ENCODE measurements at regions of chr9 and their contacts with region 1.

Region 1: DNA sequence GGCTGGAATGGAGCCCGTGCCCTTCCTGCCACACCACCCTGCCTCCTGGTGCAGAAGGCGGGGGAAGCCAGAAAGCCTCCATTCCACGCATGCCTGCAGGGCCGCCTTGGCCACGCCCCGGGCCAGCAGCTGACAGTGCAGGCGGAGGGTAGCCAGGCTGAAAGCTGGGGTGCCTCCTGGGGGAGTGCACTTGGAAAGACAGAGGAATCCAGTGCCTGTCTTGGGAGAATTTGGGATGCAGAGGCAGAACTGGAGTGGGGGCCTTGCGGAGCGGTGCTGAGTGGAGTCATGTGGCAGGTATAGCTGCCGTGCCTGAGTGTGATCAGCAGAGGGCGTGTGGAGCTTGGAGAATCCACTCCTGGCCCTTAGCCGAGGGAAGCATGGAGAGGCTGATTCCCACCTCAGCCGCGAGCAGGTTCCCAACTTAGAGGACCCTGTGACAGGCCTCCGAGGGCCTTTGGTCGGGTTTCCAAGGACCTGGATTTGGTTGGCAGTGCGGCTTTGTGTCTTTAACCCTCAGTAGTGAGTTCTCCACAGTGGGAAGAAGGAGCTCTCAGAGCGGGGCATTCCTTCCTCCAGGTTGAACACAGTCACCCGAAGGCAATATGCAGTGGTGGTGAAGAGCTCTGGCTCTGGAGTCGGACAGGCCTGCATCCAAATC is 9.1 kb upstream of the URM1 start:
- DNase-seq: peak; percentile 81
- ATAC-seq: peak; percentile 91
- H3K4me3 Mint-ChIP-seq: peak overlapping the region; percentile 60
- H3K27ac Mint-ChIP-seq: peak overlapping the region; percentile 79
- H3K4me1 Mint-ChIP-seq: peaks cover 13% of the 10 kb centered on the region
- H3K27me3 Mint-ChIP-seq: no peaks in the 10 kb centered on the region

Region 2: GRCh38 chr9:128296337-128297220 is 65.5 kb before region 1 on chr9:
- CTCF ChIA-PET with region 1: interaction called, 37 read pairs
- DNase-seq: no peak
- ATAC-seq: no peak
- H3K4me3 Mint-ChIP-seq: no peak overlapping the region
- H3K27ac Mint-ChIP-seq: no peak overlapping the region
- H3K4me1 Mint-ChIP-seq: peaks cover 10% of the 10 kb centered on the region
- H3K27me3 Mint-ChIP-seq: no peaks in the 10 kb centered on the region

Region 3: GRCh38 chr9:128412120-128412790 is 50.1 kb after region 1 on chr9:
- CTCF ChIA-PET with region 1: interaction called, 38 read pairs
- DNase-seq: peak; percentile 68
- ATAC-seq: peak; percentile 65
- H3K4me3 Mint-ChIP-seq: no peak overlapping the region
- H3K27ac Mint-ChIP-seq: no peak overlapping the region
- H3K4me1 Mint-ChIP-seq: peaks cover 3% of the 10 kb centered on the region
- H3K27me3 Mint-ChIP-seq: peaks cover 57% of the 10 kb centered on the region

Region 4: DNA sequence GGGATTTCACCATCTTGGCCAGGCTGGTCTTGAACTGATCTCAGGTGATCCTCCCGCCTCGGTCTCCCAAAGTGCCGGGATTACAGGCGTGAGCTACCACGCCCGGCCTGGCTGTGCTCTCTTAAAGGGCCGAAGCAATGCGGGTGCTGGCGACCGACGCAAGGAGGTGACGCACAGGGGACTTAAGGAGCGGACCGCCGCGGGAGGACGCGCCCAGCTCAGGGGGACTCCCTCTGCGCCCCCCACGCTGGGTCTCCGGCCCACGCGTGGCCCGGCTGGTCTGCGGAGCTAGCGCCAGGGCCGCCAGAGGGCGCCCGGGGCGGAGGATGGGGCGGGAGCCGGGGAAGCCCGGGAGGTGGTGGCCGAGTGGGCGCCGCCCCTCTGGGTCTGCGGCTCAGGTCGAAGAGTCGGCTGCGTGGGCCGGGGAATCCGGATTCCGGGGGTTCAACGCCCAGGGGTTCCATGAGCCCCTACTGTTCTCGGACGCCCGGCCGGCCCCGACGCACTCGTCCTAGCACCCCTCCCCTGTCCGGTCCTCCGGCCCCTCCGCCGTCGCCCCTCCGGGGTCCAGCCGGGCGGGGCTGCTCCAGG is 58.0 kb after region 1 on chr9:
- CTCF ChIA-PET with region 1: interaction called, 38 read pairs
- DNase-seq: peak; percentile 77
- ATAC-seq: peak; percentile 87
- H3K4me3 Mint-ChIP-seq: peak overlapping the region; percentile 70
- H3K27ac Mint-ChIP-seq: no peak overlapping the region
- H3K4me1 Mint-ChIP-seq: peaks cover 29% of the 10 kb centered on the region
- H3K27me3 Mint-ChIP-seq: peaks cover 35% of the 10 kb centered on the region

Region 5: GRCh38 chr9:128438343-128439109 is 76.4 kb after region 1 on chr9:
- CTCF ChIA-PET with region 1: interaction called, 15 read pairs
- DNase-seq: peak; percentile 87
- ATAC-seq: peak; percentile 98
- H3K4me3 Mint-ChIP-seq: no peak overlapping the region
- H3K27ac Mint-ChIP-seq: peak overlapping the region; percentile 28
- H3K4me1 Mint-ChIP-seq: peaks cover 8% of the 10 kb centered on the region
- H3K27me3 Mint-ChIP-seq: no peaks in the 10 kb centered on the region

Region 6: GRCh38 chr9:128484686-128485413 is 122.7 kb after region 1 on chr9:
- CTCF ChIA-PET with region 1: no interaction called
- DNase-seq: no peak
- ATAC-seq: no peak
- H3K4me3 Mint-ChIP-seq: no peak overlapping the region
- H3K27ac Mint-ChIP-seq: no peak overlapping the region
- H3K4me1 Mint-ChIP-seq: no peaks in the 10 kb centered on the region
- H3K27me3 Mint-ChIP-seq: no peaks in the 10 kb centered on the region